Activated CD4-positive, alpha-beta T cell treated with anti-CD3 and anti-CD28 coated beads, Interleukin-2, amount 10 ng/mL, durations not matched to agents 7 days and 5 days (primary cell): ENCODE measurements at regions of chr19 and their contacts with region 1.

Region 1: DNA sequence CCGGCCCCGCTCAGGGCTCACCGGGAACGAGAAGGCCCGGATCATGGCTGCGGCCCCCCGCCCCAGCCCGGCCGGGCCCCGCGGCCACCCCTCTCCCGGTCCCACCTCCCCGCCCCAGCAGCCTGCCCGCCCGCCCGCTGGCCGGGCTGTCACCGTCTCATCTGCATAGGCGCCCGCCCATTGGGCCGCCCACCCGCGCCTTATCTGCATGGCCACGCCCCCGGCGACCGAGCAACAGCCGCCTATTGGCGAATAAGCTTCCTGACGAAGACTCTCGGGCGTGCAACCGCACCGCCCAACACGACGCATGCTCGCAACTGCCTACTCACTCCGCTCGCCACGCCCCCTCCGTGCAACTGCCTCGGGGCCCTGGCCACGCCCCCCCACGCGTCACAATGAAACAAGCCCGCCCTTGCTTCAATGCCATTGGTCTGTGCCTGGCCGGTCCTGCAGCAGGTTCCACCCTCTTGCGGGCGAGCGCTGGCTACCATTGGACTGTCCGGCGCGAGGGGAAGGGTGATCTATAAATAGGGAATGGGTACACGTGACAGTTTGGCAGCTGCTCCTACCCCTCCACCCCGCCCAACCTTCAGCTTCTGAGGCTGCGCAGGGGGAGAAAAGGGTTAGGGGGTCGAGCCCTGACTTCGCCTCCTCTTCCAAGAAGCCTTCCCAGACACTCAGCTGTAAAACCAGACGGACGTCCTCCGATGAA is at the start of gene DACT3:
- DNase-seq: peak; percentile 100
- H3K4me3 Mint-ChIP-seq: peak within 1 kb of the TSS; percentile 65
- H3K27ac Mint-ChIP-seq: peak within 1 kb of the TSS; percentile 85
- H3K4me1 Mint-ChIP-seq: peaks cover 22% of the 10 kb centered on the region
- H3K27me3 Mint-ChIP-seq: peaks cover 23% of the 10 kb centered on the region
- total RNA-seq, gene DACT3: 0.31 to 0.42 TPM

Region 2: DNA sequence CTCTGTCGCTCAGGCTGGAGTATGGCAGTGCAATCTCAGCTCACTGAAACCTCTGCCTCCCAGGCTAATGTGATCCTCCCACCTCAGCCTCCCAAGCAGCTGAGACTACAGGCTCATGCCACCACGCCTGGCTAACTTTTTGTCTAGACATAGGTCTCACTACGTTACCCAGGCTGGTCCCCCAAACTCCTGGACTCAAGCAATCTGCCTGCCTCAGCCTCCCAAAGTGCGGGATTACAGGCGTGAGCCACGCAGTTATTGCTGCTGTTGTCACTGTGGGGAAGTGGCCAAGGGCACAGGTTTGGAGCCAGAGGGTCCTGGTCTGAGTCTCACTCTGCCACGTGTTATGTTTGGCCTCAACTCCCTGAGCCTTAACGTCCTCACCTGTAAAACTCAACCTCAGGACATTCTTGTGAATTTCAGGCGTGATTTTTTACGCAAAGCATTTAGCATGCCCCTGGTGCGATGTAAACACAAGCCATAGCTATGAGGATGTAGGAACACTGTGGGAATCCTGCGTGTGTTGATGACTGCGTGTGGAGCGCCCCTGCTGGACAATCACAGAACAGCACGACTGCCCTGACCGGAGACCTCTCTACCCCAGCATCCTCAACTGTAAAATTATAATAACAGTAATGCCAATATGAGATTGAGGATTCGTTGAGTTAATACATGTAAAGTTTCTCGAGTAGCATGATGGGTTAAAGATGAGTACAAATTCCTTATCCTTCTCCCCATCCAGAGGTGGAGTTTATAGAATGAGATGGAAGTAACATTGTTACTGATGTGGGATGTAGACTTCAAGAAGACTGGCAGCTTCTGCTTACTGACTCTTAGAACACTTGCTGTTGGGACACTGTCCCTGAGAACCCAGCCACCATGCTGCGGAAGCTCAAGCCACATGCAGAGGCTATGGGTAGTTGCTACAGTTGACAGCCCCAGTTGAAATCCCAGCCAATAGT is 123.8 kb before region 1 on chr19:
- CTCF ChIA-PET with region 1: interaction called, 13 read pairs
- POLR2A ChIA-PET with region 1: no interaction called
- DNase-seq: peak; percentile 60
- H3K4me3 Mint-ChIP-seq: no peak overlapping the region
- H3K27ac Mint-ChIP-seq: no peak overlapping the region
- H3K4me1 Mint-ChIP-seq: peaks cover 7% of the 10 kb centered on the region
- H3K27me3 Mint-ChIP-seq: peaks cover 4% of the 10 kb centered on the region

Region 3: GRCh38 chr19:46607448-46607841 is 53.7 kb before region 1 on chr19:
- CTCF ChIA-PET with region 1: interaction called, 78 read pairs
- POLR2A ChIA-PET with region 1: interaction called, 3 read pairs
- DNase-seq: no peak
- H3K4me3 Mint-ChIP-seq: no peak overlapping the region
- H3K27ac Mint-ChIP-seq: no peak overlapping the region
- H3K4me1 Mint-ChIP-seq: peaks cover 70% of the 10 kb centered on the region
- H3K27me3 Mint-ChIP-seq: no peaks in the 10 kb centered on the region

Region 4: DNA sequence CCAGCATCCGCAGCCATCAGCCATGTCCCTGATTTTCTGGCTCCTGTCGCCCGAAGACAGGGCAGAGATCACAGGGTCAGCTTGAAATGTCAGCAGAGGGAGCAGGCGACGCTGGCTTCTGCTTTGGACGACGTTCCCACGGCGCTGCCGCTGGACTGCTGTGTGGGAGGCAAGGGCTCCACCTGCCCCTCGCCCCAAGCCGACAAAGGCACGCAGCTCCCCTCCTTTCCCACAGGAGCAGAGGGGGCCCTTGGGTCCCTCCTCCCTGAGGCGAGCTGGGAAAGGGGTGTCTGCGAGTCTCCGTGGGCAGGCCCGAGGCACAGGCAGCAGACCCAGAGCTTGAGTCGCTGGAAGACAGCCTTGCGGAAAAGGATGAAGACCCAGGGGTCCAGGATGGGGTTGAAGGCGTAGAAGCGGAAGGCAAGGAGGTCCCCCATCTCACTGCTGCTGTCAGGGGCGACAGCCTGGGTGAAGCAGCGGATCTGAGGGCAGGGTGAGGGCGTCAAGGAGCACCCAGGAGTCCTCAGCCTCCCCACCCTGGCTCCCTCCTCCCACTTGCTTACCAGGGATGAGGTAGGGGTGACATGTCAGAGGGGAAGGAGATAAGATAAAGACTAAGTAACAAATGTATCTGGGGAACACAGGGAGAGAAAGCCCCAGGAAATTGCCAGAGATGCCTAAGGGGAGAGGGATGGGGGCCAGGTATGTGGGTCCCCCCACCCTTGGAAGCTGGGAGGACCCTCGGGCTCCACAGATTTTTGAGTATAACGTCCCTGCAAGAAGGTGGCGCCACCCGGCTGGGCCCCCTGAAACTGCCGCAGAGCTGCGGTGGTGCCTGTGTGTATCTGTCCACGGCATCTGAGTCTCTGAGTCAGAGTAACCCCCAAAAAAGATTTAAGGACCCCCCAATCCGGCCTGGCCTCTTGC is 39.7 kb before region 1 on chr19:
- CTCF ChIA-PET with region 1: interaction called, 20 read pairs
- POLR2A ChIA-PET with region 1: interaction called, 3 read pairs
- DNase-seq: no peak
- H3K4me3 Mint-ChIP-seq: peak overlapping the region; percentile 63
- H3K27ac Mint-ChIP-seq: peak overlapping the region; percentile 92
- H3K4me1 Mint-ChIP-seq: peaks cover 73% of the 10 kb centered on the region
- H3K27me3 Mint-ChIP-seq: no peaks in the 10 kb centered on the region

Region 5: DNA sequence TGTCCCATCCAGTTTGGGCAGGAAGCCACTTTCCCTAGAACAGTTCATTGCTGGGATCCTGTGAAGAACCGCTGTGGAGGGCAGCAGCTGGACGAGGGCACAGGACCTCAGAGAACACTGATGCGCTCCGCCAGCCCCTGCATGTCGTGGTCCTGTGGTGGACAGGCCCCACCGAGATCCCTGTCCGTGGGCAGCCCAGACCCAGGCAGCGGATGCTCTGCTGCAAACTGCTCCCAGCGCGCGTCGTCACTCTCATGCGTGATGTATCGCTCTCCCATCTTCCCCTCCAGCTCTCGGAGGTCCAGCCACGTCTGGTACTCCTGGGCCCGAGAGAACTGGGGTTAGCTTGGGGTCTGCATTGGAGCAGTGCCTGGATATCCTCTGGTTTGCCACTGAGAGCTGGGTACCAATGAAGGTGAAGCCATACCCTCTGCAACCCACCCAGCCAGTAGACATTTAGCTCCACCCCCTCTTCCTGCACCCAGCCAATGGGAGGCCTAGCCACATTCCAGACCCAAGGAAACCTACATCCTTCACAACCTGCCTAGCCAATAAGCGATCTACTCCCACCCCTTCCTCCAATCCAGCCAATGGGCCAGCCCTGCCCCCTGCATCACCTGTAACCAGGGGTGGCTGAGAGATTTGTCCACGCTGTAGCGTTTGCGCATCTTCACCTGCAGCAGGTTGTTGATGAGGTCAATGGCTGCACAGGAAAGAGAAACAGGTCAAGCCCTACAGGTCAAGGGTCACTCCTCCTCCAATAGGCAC is 13.4 kb after region 1 on chr19:
- CTCF ChIA-PET with region 1: interaction called, 21 read pairs
- POLR2A ChIA-PET with region 1: no interaction called
- DNase-seq: no peak
- H3K4me3 Mint-ChIP-seq: no peak overlapping the region
- H3K27ac Mint-ChIP-seq: no peak overlapping the region
- H3K4me1 Mint-ChIP-seq: peaks cover 19% of the 10 kb centered on the region
- H3K27me3 Mint-ChIP-seq: no peaks in the 10 kb centered on the region

Region 6: GRCh38 chr19:46803555-46803954 is 142.4 kb after region 1 on chr19:
- CTCF ChIA-PET with region 1: no interaction called
- POLR2A ChIA-PET with region 1: no interaction called
- DNase-seq: no peak
- H3K4me3 Mint-ChIP-seq: no peak overlapping the region
- H3K27ac Mint-ChIP-seq: no peak overlapping the region
- H3K4me1 Mint-ChIP-seq: no peaks in the 10 kb centered on the region
- H3K27me3 Mint-ChIP-seq: no peaks in the 10 kb centered on the region